ENCODE measurements at regions of chr20 and their contacts with region 1.

Region 1: DNA sequence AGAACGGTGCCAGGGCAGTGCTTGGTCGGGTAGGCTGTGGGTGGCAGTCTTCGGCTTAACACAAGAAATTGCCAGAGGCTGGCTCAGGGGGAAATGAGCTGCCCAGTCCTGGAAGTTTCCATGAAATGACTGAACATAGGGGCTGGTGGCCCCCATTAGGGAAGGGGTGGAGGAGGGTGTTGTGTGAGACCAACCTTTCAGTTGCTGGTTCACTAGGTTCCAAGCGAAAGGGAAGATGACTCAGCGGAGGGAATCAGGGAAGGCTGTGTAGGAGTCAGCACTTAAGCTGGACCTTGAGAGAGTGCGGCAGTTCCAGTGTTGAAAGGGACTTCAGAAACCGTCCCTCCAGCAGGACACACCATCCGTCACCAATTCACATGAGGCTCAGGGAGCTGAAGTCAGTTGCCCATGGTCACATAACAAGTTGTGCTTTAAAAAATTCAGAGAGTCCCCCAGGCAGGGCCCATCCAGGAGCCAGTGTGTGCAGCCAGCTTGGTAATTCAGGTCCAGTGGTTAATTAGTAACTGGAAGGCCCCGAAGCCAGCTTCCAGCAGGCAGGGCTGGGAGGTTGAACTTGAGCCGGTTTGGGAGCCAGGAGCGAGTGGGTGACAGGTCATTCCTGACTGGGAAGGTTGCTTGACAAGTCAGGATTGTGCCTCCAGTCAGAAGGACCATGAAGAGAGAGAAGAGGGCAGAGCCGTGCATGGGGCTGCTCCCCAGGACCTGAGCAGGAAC is at the start of gene SGK2:
- DNase-seq: peak; percentile 90 to 94
- H3K4me3 ChIP-seq: no peak within 1 kb of the TSS
- H3K4me3 Mint-ChIP-seq: peak within 1 kb of the TSS; percentile 15
- H3K27ac Mint-ChIP-seq: peak within 1 kb of the TSS; percentile 23
- H3K4me1 ChIP-seq: peaks cover 30% of the 10 kb centered on the region
- H3K4me1 Mint-ChIP-seq: peaks cover 17% of the 10 kb centered on the region
- H3K27me3 ChIP-seq: no peaks in the 10 kb centered on the region
- H3K27me3 Mint-ChIP-seq: no peaks in the 10 kb centered on the region
- CTCF ChIP-seq: no peak
- total RNA-seq, gene SGK2: 5.2 and 6.6 TPM in 2 replicates

Region 2: DNA sequence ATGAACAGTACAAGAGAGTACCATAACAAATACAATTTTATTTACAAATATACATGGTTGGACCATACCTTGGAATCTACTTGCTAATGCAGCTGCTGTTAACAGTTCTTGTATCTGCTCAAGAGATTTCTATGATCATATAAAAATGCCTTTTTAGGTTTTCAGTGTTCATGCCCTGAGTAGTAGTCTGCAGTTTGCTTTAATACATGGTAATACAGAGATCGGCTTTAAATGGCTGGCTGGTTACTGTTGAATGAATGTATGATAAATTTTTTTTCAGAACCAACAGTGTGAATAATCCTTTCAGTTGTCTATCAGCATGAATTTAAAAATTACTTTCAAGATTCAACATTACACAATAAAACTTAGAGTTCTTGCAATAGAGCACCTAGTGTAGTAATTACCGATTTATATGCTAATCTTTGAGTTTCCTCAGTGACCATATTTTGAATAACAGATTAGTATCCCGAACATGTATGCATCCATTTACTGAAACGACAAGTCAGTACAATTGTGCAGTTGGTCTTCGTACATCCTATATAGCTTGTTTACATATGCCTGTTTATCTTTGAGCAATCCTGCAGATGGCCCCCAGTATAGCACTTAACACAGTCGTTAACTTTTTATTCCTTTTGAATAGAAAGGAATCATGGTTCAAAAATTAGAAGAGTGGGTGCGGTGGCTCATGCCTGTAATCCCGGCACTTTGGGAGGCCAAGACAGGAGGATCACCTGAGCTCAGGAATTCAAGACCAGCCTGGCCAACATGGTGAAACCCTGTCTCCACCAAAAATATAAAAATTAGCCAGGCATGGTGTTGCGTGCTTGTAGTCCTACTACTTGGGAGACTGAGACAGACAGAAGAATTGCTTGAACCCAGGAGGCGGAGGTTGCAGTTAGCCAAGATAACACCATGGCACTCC is 94.5 kb before region 1 on chr20:
- CTCF ChIA-PET with region 1: no interaction called
- POLR2A ChIA-PET with region 1: no interaction called
- intact Hi-C with region 1: no loop called
- DNase-seq: no peak
- H3K4me3 ChIP-seq: no peak overlapping the region
- H3K4me3 Mint-ChIP-seq: no peak overlapping the region
- H3K27ac Mint-ChIP-seq: peak overlapping the region; percentile 53
- H3K4me1 ChIP-seq: peaks cover 9% of the 10 kb centered on the region
- H3K4me1 Mint-ChIP-seq: peaks cover 18% of the 10 kb centered on the region
- H3K27me3 ChIP-seq: no peaks in the 10 kb centered on the region
- H3K27me3 Mint-ChIP-seq: no peaks in the 10 kb centered on the region
- CTCF ChIP-seq: no peak

Region 3: GRCh38 chr20:43590392-43591323 is 32.1 kb after region 1 on chr20 and contains the start of gene IFT52:
- CTCF ChIA-PET with region 1: interaction called, 11 read pairs
- POLR2A ChIA-PET with region 1: interaction called, 13 read pairs
- intact Hi-C with region 1: loop called (anchors 1 kb)
- DNase-seq: peak; percentile 98
- H3K4me3 ChIP-seq: peak within 1 kb of the TSS; percentile 72
- H3K4me3 Mint-ChIP-seq: peak within 1 kb of the TSS; percentile 86
- H3K27ac Mint-ChIP-seq: peak within 1 kb of the TSS; percentile 90
- H3K4me1 ChIP-seq: no peaks in the 10 kb centered on the region
- H3K4me1 Mint-ChIP-seq: peaks cover 15% of the 10 kb centered on the region
- H3K27me3 ChIP-seq: no peaks in the 10 kb centered on the region
- H3K27me3 Mint-ChIP-seq: no peaks in the 10 kb centered on the region
- CTCF ChIP-seq: peak in 1 of 2 experiments; percentile 17
- total RNA-seq, gene IFT52: 56.1 and 70.5 TPM in 2 replicates

Region 4: GRCh38 chr20:43691928-43692524 is 133.4 kb after region 1 on chr20:
- CTCF ChIA-PET with region 1: interaction called, 6 read pairs
- POLR2A ChIA-PET with region 1: no interaction called
- intact Hi-C with region 1: loop called (anchors 5 kb)
- DNase-seq: peak; percentile 80 to 88
- H3K4me3 ChIP-seq: no peak overlapping the region
- H3K4me3 Mint-ChIP-seq: no peak overlapping the region
- H3K27ac Mint-ChIP-seq: no peak overlapping the region
- H3K4me1 ChIP-seq: no peaks in the 10 kb centered on the region
- H3K4me1 Mint-ChIP-seq: peaks cover 4% of the 10 kb centered on the region
- H3K27me3 ChIP-seq: no peaks in the 10 kb centered on the region
- H3K27me3 Mint-ChIP-seq: no peaks in the 10 kb centered on the region
- CTCF ChIP-seq: peak; percentile 95